Activated CD4-positive, alpha-beta memory T cell treated with anti-CD3 and anti-CD28 coated beads, Interleukin-2, amount 10 ng/mL, durations not matched to agents 7 days and 5 days (primary cell): ENCODE measurements at regions of chr19 and their contacts with region 1.

Region 1: GRCh38 chr19:47273313-47273977 is 1.2 kb upstream of the INAFM1 start:
- DNase-seq: peak; percentile 93
- H3K4me3 Mint-ChIP-seq: peak overlapping the region; percentile 98
- H3K27ac Mint-ChIP-seq: peak overlapping the region; percentile 99
- H3K4me1 Mint-ChIP-seq: peaks cover 21% of the 10 kb centered on the region
- H3K27me3 Mint-ChIP-seq: no peaks in the 10 kb centered on the region

Region 2: DNA sequence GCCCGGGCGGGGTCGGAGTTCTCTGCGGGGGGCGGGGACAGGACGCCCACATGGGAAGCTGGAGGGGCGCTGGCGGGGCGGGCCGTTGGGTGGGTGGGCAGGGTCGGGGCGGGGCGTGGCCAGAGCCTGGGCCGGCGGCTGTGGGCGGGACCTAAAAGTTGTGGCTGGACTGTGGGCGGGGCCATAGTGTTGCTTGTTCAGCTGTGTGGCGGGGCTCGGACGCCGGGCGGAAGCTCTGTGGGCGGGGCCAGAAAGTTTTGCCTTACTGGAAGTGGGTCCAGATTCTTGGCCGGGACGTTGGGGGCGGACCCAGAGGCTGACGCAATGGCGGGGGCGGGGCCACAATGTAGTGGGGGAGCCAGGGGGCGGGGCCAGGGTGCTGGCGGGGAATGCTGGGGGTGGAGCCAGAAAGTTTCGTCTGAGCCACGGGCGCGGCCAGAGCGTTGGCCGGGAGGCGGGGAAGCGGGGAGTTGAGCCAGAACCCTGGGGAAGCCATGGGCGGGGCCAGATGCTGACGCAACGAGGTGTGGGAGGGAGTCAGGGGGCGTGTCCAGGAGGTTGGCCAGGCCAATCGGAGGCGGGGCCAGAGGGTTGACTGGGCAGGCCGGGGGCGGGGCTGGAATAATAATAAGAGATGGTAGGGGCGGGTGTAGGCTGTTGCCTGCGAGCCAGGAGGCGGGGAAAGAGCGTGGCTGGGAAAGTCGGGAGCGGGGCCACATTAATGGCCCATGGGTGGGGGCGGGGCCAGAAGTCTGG is 16.6 kb before region 1 on chr19:
- CTCF ChIA-PET with region 1: interaction called, 6 read pairs
- POLR2A ChIA-PET with region 1: interaction called, 85 read pairs
- DNase-seq: peak; percentile 100
- H3K4me3 Mint-ChIP-seq: peak overlapping the region; percentile 85
- H3K27ac Mint-ChIP-seq: peak overlapping the region; percentile 85
- H3K4me1 Mint-ChIP-seq: peaks cover 40% of the 10 kb centered on the region
- H3K27me3 Mint-ChIP-seq: no peaks in the 10 kb centered on the region

Region 3: GRCh38 chr19:47284324-47284899 is 11.0 kb after region 1 on chr19:
- CTCF ChIA-PET with region 1: interaction called, 17 read pairs
- POLR2A ChIA-PET with region 1: interaction called, 9 read pairs
- DNase-seq: peak; percentile 35
- H3K4me3 Mint-ChIP-seq: no peak overlapping the region
- H3K27ac Mint-ChIP-seq: no peak overlapping the region
- H3K4me1 Mint-ChIP-seq: peaks cover 7% of the 10 kb centered on the region
- H3K27me3 Mint-ChIP-seq: no peaks in the 10 kb centered on the region

Region 4: DNA sequence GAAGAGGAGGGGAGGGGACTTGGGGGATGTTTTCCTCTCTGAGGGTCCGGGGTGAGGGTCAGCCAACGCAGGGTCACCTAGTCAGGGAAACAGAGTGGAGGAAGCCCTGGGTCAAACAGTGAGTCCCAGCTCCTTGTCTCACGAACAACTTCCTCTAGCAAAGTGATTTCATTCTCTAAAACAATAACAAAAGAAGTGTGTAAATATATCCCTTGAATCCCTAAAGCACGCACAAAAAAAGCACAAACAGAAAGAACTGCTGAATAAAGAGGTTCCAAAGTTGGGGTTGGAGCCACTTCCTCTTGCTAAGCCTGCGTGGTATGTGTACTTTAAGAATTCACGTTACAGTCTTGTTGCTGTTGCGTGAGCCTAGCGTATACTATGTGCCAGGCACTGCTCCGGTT is 57.0 kb after region 1 on chr19:
- CTCF ChIA-PET with region 1: no interaction called
- POLR2A ChIA-PET with region 1: no interaction called
- DNase-seq: no peak
- H3K4me3 Mint-ChIP-seq: no peak overlapping the region
- H3K27ac Mint-ChIP-seq: peak overlapping the region; percentile 68
- H3K4me1 Mint-ChIP-seq: peaks cover 26% of the 10 kb centered on the region
- H3K27me3 Mint-ChIP-seq: peaks cover 8% of the 10 kb centered on the region